Sigmoid colon (tissue), 7 donors: ENCODE measurements at regions of chr9 and their contacts with region 1.

Region 1: GRCh38 chr9:128191406-128192046 is at the start of gene CIZ1:
- DNase-seq: peak; percentile 90
- H3K4me3 ChIP-seq: peak within 1 kb of the TSS; percentile 66 to 96 (median 90)
- H3K27ac ChIP-seq: peak within 1 kb of the TSS; percentile 87 to 96 (median 93)
- H3K4me1 ChIP-seq: peaks cover 0 to 36% (median 22%) of the 10 kb centered on the region in 4 donors
- H3K27me3 ChIP-seq: no peaks in the 10 kb centered on the region
- CTCF ChIP-seq: peak; percentile 10 to 90 (median 46)
- EP300 ChIP-seq: no peak
- POLR2A ChIP-seq: peak in 1 of 2 donors; percentile 29
- total RNA-seq, gene CIZ1: 60.2 to 116 (median 68.5) TPM

Region 2: GRCh38 chr9:128127990-128128835 is 63.3 kb before region 1 on chr9:
- intact Hi-C with region 1: loop called (anchors 5 kb)
- DNase-seq: peak; percentile 89
- H3K4me3 ChIP-seq: peak overlapping the region; percentile 76 to 99 (median 96)
- H3K27ac ChIP-seq: peak overlapping the region; percentile 90 to 97 (median 92)
- H3K4me1 ChIP-seq: peaks cover 0 to 39% (median 35%) of the 10 kb centered on the region in 4 donors
- H3K27me3 ChIP-seq: no peaks in the 10 kb centered on the region
- CTCF ChIP-seq: no peak
- EP300 ChIP-seq: no peak
- POLR2A ChIP-seq: peak; percentile 28 to 33